Right cardiac atrium (tissue), 5 donors: ENCODE measurements at regions of chr10 and their contacts with region 1.

Region 1: DNA sequence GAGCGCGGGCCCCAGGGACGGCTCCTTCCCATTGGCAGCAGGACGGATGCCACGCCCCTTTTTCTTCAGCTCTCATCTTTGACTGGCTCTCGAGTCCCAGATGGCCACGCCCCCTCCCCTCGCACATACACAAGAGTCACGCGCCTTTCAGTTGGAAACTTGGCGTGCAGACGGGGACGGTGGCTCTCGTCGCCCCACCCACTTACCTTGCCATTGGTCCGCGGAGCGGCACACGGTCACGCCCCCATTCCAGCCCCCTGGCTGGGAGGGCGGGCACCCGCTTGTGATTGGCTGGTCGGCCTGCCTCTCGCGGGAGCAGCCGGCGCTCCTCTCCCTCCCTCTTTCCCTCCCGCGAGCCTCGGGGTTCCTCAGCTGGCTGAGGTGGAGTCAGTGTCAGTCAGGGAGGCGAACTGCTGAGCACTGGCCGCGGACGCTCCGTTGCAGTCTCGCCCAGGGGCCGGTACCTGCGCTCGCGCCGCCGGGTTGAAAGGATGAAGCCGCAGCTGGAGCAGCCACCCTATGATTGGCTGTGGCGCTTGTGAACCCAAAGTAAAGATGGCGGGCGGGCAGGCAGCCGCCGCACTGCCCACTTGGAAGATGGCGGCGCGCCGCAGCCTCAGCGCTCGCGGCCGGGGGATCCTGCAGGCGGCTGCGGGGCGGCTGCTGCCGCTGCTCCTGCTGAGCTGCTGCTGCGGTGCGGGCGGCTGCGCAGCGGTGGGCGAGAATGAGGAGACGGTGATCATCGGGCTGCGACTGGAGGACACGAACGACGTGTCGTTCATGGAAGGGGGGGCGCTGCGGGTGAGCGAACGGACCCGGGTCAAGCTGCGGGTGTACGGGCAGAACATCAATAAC is at the start of gene CNNM2:
- DNase-seq: peak; percentile 100
- ATAC-seq: peak; percentile 99
- H3K4me3 ChIP-seq: peak within 1 kb of the TSS; percentile 56
- H3K27ac ChIP-seq: peak within 1 kb of the TSS; percentile 27
- H3K4me1 ChIP-seq: peaks cover 7% of the 10 kb centered on the region
- H3K27me3 ChIP-seq: no peaks in the 10 kb centered on the region
- total RNA-seq, gene CNNM2: 3.6 to 4.6 (median 3.8) TPM

Region 2: GRCh38 chr10:102322914-102323313 is 595.3 kb before region 1 on chr10:
- intact Hi-C with region 1: no loop called
- DNase-seq: peak in 1 of 3 donors; percentile 42
- ATAC-seq: no peak
- H3K4me3 ChIP-seq: no peak overlapping the region
- H3K27ac ChIP-seq: no peak overlapping the region
- H3K4me1 ChIP-seq: no peaks in the 10 kb centered on the region
- H3K27me3 ChIP-seq: no peaks in the 10 kb centered on the region

Region 3: GRCh38 chr10:103053659-103054581 is 135.7 kb after region 1 on chr10:
- intact Hi-C with region 1: loop called in 1 of 4 experiments (anchors 5 kb)
- DNase-seq: peak; percentile 64 to 84 (median 79)
- ATAC-seq: peak; percentile 95
- H3K4me3 ChIP-seq: peak overlapping the region; percentile 13
- H3K27ac ChIP-seq: no peak overlapping the region
- H3K4me1 ChIP-seq: no peaks in the 10 kb centered on the region
- H3K27me3 ChIP-seq: no peaks in the 10 kb centered on the region

Region 4: DNA sequence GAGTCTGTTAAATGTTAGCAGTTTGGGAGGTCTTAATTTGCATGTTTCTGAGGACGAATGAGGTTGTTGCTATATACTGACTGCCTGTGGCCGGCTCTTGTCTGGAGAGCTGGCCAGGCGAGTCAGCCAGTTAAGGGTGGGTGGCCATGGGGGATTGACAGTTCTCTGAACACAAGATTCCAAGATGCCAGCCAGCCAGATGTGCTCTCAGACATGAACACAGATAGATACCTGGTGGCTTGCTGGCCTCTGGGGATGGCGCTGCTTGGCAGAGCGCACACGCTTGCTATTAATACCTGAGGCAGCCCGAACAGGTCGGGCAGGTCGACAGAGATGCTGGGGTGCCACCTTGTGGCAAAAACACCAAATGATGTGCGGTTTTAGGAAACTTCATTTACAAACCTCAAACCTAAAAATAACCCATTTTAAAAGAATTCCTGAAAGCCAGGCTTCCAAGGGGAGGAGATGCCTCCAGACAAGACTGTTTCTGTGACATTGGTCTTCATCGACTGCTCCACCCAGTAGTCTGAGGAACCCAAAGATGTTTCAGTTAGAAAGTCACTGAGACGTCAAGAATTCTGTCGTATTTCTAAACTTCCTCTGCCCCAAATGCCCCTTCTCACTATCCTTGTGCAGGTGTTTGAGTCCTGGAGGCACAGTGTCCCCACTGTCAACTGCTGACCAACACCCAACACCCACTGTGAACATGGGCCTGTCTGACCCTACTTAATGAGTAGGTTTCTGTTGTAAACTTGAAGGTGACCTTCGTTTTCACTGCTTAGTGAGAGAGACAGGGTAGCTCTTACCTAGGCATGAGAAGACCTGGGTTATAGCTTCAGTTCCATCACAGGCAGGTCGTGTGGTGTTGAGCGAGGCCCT is 151.5 kb after region 1 on chr10:
- intact Hi-C with region 1: loop called (anchors 2 to 5 kb)
- DNase-seq: peak; percentile 34 to 75 (median 70)
- ATAC-seq: peak; percentile 68 to 76
- H3K4me3 ChIP-seq: no peak overlapping the region
- H3K27ac ChIP-seq: no peak overlapping the region
- H3K4me1 ChIP-seq: no peaks in the 10 kb centered on the region
- H3K27me3 ChIP-seq: no peaks in the 10 kb centered on the region

Region 5: DNA sequence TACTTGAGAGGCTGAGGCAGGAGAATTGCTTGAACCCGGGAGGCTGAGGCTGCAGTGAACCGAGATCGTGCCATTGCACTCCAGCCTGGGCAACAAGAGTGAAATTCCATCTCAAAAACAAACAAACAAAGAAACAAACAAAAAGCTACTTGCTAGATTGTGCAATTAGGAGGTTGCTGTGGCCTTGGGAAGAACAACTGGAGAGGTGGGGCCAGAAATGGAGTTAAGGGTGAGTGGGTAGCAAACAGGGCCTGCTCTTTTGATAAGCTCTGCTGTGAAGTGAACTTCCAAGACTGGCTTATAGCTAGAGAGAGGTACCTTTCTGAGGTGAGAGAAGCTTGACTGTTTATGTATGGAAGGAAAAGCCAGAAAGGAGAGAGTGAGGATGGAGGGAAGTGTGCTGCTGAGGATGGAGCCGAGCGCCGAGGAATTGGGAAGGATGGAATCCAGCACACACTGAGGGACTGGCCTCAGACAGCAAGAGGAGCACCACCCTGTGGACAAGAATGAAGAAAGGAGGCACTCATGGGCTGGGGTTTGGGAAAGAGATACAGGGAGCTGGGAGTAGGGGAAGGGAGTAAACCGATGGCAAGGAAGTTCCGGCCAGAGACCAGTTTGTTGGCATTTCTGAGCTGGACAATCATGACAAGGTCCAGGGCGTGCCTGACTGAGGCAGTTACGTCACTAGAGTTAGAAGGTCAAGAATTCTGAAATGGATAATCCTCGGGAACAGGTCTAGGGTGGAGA is 320.5 kb after region 1 on chr10:
- intact Hi-C with region 1: loop called in 3 of 4 experiments (anchors 5 to 10 kb)
- DNase-seq: peak in 2 of 3 donors; percentile 15 to 42
- ATAC-seq: peak; percentile 83
- H3K4me3 ChIP-seq: no peak overlapping the region
- H3K27ac ChIP-seq: no peak overlapping the region
- H3K4me1 ChIP-seq: no peaks in the 10 kb centered on the region
- H3K27me3 ChIP-seq: no peaks in the 10 kb centered on the region

Region 6: GRCh38 chr10:103696411-103697145 is 778.4 kb after region 1 on chr10:
- intact Hi-C with region 1: no loop called
- DNase-seq: peak; percentile 86 to 88 (median 86)
- ATAC-seq: peak; percentile 69 to 92
- H3K4me3 ChIP-seq: no peak overlapping the region
- H3K27ac ChIP-seq: peak overlapping the region; percentile 28
- H3K4me1 ChIP-seq: peaks cover 5% of the 10 kb centered on the region
- H3K27me3 ChIP-seq: no peaks in the 10 kb centered on the region